ENCODE measurements at regions of chr1 and their contacts with region 1.

Region 1: GRCh38 chr1:234893725-234894630 is 234.7 kb downstream of the TOMM20 start:
- DNase-seq: no peak
- H3K4me3 ChIP-seq: no peak overlapping the region
- CTCF ChIP-seq: no peak

Region 2: DNA sequence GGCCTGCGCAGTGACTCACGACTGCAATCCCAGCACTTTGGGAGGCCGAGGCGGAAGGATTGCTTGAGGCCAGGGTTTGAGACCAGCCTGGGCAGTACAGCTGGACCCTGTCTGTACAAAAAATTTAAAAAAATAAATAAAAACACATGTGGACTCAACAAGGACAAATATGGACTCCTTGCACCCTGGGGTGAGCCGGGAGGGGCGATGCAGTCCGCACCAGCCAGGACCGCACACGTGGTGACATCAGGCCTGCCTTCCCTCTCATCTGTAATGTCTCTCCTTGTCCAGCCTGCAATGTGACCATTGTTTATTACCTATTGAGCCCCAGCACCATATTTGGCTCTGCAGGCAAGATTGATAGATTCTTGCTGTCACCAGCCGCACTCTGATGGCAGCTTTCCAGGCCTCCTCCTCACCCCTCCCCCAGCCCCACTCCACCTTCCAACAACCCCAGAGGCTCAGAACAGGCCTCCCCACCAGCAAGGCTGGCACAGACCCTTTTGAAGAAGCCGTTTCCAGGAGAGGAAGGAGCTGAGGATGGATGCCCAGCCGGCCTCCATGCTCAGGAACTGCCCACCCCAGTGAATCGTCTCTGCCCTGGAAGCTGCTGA is 339.2 kb before region 1 on chr1:
- in situ Hi-C with region 1: no loop called
- DNase-seq: no peak
- H3K4me3 ChIP-seq: no peak overlapping the region
- CTCF ChIP-seq: no peak

Region 3: DNA sequence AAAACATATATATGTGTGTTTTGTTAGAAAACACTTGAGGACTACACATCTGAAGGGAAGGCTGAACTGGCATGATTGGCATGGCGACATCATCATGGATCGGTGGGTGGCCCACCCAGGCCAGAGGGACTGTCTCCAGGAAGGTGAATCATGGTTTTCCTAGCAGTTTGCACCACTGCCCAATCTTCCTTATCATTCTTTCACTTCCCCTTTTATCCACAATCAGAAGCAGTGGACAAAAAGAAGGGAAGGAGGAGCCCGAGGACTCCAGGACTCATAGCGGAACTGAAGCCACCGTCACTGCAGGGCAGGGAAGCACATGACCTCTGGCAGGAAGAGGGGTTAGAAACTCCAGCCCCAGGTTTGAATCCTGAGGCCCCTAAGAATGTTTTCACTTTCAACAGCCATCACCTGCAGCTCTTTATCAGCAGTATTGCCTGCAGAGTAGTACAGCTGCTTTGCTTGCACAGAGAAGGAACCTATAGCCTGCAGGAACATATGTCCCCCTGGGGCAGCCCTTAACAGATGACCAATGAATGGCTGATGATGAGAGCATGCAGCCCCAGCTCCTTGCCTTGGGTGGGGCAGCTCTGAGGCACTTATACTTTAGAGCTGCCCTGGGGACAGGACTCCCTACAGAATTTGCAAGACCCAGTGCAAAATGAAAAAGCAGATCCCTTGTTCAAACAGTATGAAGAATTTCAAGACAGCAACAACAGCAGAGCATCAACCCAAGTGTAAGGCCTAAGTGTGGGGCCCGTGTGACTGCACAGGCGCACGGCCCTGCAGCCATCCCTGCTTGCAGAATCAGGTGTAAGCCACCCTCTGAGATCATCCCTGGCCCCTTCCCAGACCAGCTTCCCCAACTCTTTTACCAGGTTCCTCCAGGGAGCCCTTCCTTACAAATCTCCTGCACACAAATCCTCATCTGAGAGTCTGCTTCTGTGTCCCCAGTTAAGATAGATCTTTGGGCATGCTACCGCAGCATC is 42.2 kb before region 1 on chr1:
- in situ Hi-C with region 1: loop called (anchors 5 kb)
- DNase-seq: no peak
- H3K4me3 ChIP-seq: no peak overlapping the region
- CTCF ChIP-seq: no peak

Region 4: DNA sequence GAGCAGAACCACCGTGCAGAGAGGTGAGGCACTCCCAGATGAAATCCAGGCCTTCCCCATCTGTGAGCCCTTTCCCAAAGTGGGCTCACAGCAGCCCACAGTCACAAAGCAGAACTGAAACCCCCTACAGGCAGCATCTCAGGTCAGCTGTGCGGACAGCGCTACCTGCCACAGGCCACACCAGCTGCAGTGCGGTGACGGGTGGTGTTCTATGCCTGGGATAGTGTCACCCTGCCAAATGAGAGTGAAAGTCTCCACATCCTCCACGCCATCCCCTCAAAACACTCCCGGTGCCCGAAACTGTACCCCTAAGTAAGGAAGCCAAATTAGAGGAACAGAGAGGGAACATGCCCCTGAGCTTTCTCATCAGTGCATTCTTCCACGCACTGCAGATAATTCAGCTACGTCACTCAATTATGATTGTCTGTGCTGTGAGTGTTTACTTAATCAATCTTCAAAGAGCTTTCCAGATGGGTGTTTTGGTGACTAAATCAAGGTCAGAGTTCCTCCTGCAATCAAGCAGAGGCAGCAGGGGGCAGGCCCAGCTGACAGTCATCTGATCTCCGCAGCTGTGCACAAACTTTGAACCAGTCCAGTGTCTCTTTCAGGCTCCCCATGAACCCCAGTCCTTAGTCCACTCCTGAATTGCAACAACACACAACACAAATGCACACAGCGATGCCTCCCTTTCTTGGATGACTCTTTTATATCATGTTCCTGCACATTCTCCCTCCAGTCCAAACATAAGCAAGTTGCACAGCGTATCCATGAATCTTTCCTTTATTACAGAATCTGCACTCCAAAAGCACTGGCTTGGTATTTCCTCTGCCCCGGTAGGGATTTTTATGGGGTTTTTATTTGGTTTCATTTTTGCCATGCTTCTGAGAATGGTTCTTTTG is 84.7 kb after region 1 on chr1:
- in situ Hi-C with region 1: loop called (anchors 5 kb)
- DNase-seq: no peak
- H3K4me3 ChIP-seq: no peak overlapping the region
- CTCF ChIP-seq: no peak

Measured in astrocyte of the cerebellum (primary cell).